Mucosa of descending colon (tissue), 3 donors: ENCODE measurements at regions of chr11 and their contacts with region 1.

Region 1: DNA sequence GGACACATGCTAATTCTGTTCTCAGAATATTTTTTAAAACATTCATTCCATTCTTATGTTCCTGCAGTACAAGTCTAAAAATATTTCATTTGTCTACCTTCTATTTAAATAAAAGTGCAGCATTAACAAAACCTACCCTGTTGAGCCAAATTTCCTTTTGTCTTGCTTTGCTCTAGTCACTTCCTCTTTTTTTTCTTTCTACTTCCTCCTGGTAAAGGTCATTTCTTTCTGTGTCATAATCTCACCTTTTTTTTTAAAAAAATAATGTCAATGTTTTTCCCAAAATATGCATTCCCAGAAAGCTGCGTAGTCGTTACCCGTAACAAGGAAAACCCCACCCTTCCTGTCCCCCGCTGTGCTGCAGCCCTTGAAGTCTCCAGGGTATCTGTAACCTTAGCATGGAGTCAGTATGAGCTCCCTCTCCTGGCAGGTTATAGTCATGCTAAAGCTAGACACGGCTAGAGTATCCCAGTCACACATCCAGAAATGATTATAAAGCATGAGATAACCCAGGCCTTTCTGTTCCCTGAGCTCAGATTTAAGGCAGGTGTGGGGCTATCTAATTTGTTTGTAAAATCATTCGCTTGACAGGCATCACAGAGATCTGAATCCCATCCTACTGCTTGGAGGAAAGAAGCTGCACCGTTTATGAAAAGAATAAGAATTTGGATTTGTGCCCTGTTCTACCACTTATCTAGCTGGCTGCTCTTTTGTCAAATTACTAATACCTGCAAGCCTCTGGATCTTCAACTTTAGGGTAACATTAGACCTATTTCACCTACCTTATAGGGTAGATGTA is 51.1 kb upstream of the EED start:
- DNase-seq: peak; percentile 60 to 87 (median 61)
- ATAC-seq: peak; percentile 97
- H3K4me3 ChIP-seq: no peak overlapping the region
- H3K4me1 ChIP-seq: no peaks in the 10 kb centered on the region
- CTCF ChIP-seq: peak; percentile 48

Region 2: DNA sequence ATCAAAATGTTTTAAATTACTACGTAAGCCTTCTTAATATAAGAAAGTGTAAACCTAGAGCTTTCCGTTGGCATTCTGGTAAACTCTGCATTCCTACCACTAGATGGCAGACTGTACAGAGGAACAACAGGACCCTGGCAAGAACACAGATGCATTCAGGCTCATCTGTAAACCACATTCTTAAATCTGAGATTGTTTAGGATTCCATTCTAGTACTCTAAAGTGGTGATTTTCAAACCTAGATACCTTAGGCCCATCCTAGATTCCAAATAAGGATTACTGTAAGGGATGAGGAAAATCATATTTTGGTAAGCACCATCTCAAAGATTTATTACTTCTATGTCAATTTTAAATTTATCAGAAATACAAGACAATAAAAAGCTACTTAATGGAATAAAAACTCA is 151.5 kb before region 1 on chr11:
- intact Hi-C with region 1: loop called in 1 of 2 experiments (anchors 5 kb)
- DNase-seq: peak in 1 of 3 donors; percentile 90
- ATAC-seq: peak; percentile 97
- H3K4me3 ChIP-seq: no peak overlapping the region
- H3K4me1 ChIP-seq: peaks cover 13% of the 10 kb centered on the region
- CTCF ChIP-seq: peak; percentile 62